Activated T-helper 2 cell treated with anti-CD3 and anti-CD28 coated beads, Interferon-gamma antibody, Interleukin-2, Interleukin-4, amounts not matched to agents 10 μg/mL and 5 μg/mL and 100 μg/mL, durations not matched to agents 14 hours and 24 hours and 36 hours (primary cell): ENCODE measurements at regions of chr17 and their contacts with region 1.

Region 1: GRCh38 chr17:35969558-35970380 is 11.5 kb downstream of the CCL16 start:
- DNase-seq: peak; percentile 53
- H3K4me3 Mint-ChIP-seq: no peak overlapping the region
- H3K27ac Mint-ChIP-seq: no peak overlapping the region
- H3K4me1 Mint-ChIP-seq: no peaks in the 10 kb centered on the region
- H3K27me3 Mint-ChIP-seq: peaks cover 11% of the 10 kb centered on the region

Region 2: GRCh38 chr17:35923609-35924114 is 46.1 kb before region 1 on chr17:
- intact Hi-C with region 1: no loop called
- DNase-seq: no peak
- H3K4me3 Mint-ChIP-seq: no peak overlapping the region
- H3K27ac Mint-ChIP-seq: no peak overlapping the region
- H3K4me1 Mint-ChIP-seq: peaks cover 32% of the 10 kb centered on the region
- H3K27me3 Mint-ChIP-seq: no peaks in the 10 kb centered on the region

Region 3: GRCh38 chr17:36148559-36149295 is 179.0 kb after region 1 on chr17:
- intact Hi-C with region 1: loop called (anchors 1 kb)
- DNase-seq: peak; percentile 42
- H3K4me3 Mint-ChIP-seq: no peak overlapping the region
- H3K27ac Mint-ChIP-seq: no peak overlapping the region
- H3K4me1 Mint-ChIP-seq: peaks cover 1% of the 10 kb centered on the region
- H3K27me3 Mint-ChIP-seq: peaks cover 24% of the 10 kb centered on the region

Region 4: DNA sequence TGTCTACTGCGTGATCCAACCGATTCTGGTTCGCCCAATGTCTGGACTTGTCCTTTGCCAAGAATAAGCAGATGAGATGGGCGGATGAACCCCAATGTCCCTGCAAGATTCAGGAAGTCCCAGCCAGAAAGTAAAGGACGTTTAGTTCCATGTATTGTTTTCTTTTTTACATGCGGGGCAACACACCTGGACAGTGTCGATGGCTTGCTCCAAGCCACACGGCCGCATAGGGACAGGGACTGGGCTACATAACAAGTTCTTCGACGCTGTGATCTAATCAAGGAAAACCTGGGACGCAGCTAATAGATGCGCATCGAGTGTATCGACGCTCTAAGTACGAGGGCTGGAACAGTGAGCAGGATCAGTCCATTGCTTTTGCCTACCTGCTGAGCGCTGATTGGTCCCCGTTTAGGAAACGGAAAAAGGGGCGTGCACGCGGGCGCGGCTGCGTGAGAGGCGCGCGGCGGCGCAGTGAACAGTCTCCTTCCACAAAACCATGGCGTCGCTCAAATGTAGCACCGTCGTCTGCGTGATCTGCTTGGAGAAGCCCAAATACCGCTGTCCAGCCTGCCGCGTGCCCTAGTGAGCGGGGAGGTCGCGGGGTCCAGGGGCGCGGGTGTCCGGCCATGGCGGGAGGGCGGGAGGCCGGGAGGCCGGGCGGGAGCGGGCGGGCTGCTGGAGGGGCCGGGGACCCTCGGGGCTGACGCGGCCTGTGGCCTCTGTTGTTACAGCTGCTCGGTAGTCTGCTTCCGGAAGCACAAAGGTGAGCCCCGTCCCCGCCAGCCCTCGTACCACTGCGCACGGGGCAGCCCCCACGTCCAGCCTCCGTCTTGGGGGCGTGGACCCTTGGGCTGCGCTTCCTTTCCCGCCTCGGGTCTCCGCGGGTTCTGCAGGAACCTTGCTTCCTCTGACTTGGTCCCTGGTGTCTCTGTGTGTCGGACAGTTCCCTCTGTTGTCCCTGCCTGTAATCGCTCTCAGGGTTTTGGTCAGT is 516.7 kb after region 1 on chr17 and contains the start of gene ZNHIT3:
- intact Hi-C with region 1: loop called (anchors 5 kb)
- DNase-seq: peak; percentile 90
- H3K4me3 Mint-ChIP-seq: peak within 1 kb of the TSS; percentile 99
- H3K27ac Mint-ChIP-seq: peak within 1 kb of the TSS; percentile 99
- H3K4me1 Mint-ChIP-seq: peaks cover 33% of the 10 kb centered on the region
- H3K27me3 Mint-ChIP-seq: peaks cover 10% of the 10 kb centered on the region
- total RNA-seq, gene ZNHIT3: 46.8 and 48.2 TPM in 2 replicates